CD4-positive, alpha-beta T cell (primary cell): ENCODE measurements at regions of chr4 and their contacts with region 1.

Region 1: GRCh38 chr4:158856852-158857251 is 88.0 kb downstream of the FNIP2 start:
- DNase-seq: peak in 3 of 14 experiments; percentile 50 to 52 (median 51)
- ATAC-seq: peak; percentile 59
- H3K4me3 ChIP-seq: no peak overlapping the region
- H3K4me3 Mint-ChIP-seq: no peak overlapping the region
- H3K27ac ChIP-seq: no peak overlapping the region
- H3K27ac Mint-ChIP-seq: no peak overlapping the region
- H3K4me1 ChIP-seq: no peaks in the 10 kb centered on the region
- H3K4me1 Mint-ChIP-seq: no peaks in the 10 kb centered on the region
- H3K27me3 ChIP-seq: no peaks in the 10 kb centered on the region
- H3K27me3 Mint-ChIP-seq: no peaks in the 10 kb centered on the region
- CTCF ChIP-seq: peak; percentile 31

Region 2: DNA sequence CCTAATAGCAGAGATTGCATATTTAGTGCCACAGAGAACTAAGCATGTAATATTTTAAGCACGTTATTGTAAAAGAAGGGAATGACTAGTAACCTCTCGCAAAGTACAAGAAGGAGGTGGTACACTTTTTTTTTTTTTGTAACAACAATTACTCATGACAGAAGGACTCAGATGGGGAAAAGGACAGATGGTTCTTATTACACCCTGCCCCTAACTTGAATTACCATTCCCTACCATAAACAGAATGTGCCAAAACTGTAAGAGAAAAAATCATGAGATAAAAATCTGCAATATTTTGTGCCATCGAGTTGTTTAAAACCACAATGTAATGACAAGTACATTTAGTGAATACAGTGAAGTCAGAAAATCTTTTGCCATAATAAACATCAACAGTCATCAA is 213.1 kb after region 1 on chr4:
- CTCF ChIA-PET with region 1: no interaction called
- POLR2A ChIA-PET with region 1: no interaction called
- intact Hi-C with region 1: loop called in 1 of 2 experiments (anchors 10 kb)
- DNase-seq: no peak
- ATAC-seq: no peak
- H3K4me3 ChIP-seq: no peak overlapping the region
- H3K4me3 Mint-ChIP-seq: no peak overlapping the region
- H3K27ac ChIP-seq: no peak overlapping the region
- H3K27ac Mint-ChIP-seq: no peak overlapping the region
- H3K4me1 ChIP-seq: no peaks in the 10 kb centered on the region
- H3K4me1 Mint-ChIP-seq: no peaks in the 10 kb centered on the region
- H3K27me3 ChIP-seq: no peaks in the 10 kb centered on the region
- H3K27me3 Mint-ChIP-seq: no peaks in the 10 kb centered on the region
- CTCF ChIP-seq: no peak

Region 3: DNA sequence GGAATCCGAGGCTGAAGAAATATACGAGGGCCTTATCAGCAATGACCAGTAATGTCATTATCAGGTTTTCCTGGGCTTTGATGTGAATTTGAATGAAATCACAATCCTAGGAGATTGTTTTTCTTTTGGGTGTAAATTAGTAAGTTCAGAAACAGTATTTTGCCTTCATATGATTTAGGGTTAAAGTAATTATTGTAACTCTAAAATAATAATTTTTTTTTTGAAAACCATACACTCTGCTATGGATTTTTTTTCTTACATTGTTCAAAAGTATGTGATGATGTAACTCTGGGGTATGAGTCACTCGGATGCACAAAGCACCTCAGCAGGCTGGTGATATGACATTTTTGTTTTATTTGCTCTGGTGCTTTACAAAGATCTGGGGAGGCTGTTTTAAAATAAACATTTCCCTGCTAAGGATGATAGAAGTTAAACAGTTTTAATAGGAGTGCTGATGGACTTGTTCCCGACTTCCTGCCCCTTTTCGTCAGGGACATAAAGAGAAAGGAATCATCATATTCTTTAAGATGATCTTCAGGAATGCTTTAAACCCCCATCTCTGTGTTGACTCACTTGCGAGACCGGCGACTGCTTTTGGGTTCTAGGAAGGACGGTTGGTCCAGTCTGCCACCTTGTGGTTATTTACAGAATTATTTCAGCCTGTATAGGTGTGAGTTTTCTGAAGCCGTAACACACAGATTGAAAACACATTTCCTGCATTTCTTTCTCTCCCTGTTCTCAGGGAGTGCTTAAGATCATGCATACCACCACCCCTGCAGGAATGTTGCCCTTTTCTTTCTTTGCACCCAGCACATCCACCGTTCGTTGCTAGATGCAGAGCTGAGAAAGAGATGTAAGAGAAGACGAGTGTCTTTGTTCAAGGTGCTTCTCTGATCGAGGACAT is 318.5 kb after region 1 on chr4:
- CTCF ChIA-PET with region 1: interaction called, 5 read pairs
- POLR2A ChIA-PET with region 1: no interaction called
- intact Hi-C with region 1: loop called (anchors 1 to 2 kb)
- DNase-seq: peak; percentile 27 to 83 (median 38)
- ATAC-seq: peak; percentile 94
- H3K4me3 ChIP-seq: no peak overlapping the region
- H3K4me3 Mint-ChIP-seq: no peak overlapping the region
- H3K27ac ChIP-seq: no peak overlapping the region
- H3K27ac Mint-ChIP-seq: no peak overlapping the region
- H3K4me1 ChIP-seq: peaks cover 6% of the 10 kb centered on the region
- H3K4me1 Mint-ChIP-seq: peaks cover 49% of the 10 kb centered on the region
- H3K27me3 ChIP-seq: no peaks in the 10 kb centered on the region
- H3K27me3 Mint-ChIP-seq: no peaks in the 10 kb centered on the region
- CTCF ChIP-seq: peak; percentile 87

Region 4: GRCh38 chr4:159206427-159206871 is 349.6 kb after region 1 on chr4:
- CTCF ChIA-PET with region 1: interaction called, 8 read pairs
- POLR2A ChIA-PET with region 1: no interaction called
- intact Hi-C with region 1: loop called (anchors 10 kb)
- DNase-seq: peak in 4 of 14 experiments; percentile 10 to 26 (median 16)
- ATAC-seq: no peak
- H3K4me3 ChIP-seq: no peak overlapping the region
- H3K4me3 Mint-ChIP-seq: no peak overlapping the region
- H3K27ac ChIP-seq: no peak overlapping the region
- H3K27ac Mint-ChIP-seq: no peak overlapping the region
- H3K4me1 ChIP-seq: peaks cover 10% of the 10 kb centered on the region
- H3K4me1 Mint-ChIP-seq: peaks cover 23% of the 10 kb centered on the region
- H3K27me3 ChIP-seq: no peaks in the 10 kb centered on the region
- H3K27me3 Mint-ChIP-seq: no peaks in the 10 kb centered on the region
- CTCF ChIP-seq: no peak

Region 5: DNA sequence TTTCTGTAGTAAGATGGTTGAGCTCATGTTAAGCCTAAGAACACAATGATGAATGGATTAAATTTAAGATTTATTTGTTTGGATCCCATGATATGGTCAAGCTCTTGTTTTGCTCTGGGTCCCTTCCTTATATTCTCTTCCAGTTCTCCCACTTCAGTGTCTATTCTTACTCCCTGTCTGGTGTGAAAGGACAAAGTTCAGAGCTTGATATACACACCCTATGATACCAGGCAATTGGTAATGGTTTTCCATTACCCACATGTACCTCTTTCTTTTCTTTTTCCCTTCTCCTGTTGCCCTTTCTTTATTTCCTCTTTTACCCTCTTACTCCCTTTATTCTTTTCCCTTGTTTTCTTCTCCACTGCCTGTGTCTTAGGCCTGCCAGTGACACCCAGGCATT is 469.6 kb after region 1 on chr4:
- CTCF ChIA-PET with region 1: no interaction called
- POLR2A ChIA-PET with region 1: no interaction called
- intact Hi-C with region 1: no loop called
- DNase-seq: no peak
- ATAC-seq: no peak
- H3K4me3 ChIP-seq: no peak overlapping the region
- H3K4me3 Mint-ChIP-seq: no peak overlapping the region
- H3K27ac ChIP-seq: no peak overlapping the region
- H3K27ac Mint-ChIP-seq: no peak overlapping the region
- H3K4me1 ChIP-seq: no peaks in the 10 kb centered on the region
- H3K4me1 Mint-ChIP-seq: no peaks in the 10 kb centered on the region
- H3K27me3 ChIP-seq: no peaks in the 10 kb centered on the region
- H3K27me3 Mint-ChIP-seq: no peaks in the 10 kb centered on the region
- CTCF ChIP-seq: no peak